Mammary epithelial cell (primary cell): ENCODE measurements at regions of chr11 and their contacts with region 1.

Region 1: DNA sequence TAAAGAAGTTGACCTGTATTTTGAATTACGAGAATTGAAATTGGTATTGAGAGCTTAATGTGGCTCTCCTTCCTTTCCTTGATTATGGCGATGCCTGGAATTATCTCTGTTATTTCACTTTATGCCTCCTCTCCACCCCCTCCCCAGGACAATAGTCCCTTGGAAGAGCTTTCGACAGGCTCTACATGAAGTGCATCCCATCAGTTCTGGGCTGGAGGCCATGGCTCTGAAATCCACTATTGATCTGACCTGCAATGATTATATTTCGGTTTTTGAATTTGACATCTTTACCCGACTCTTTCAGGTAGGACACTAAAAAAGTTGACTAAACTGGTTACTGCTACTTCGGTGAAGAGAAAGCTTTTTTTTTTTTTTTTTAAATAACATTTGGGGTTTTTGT is 43.2 kb downstream of the MCAM start:
- DNase-seq: no peak
- H3K4me3 ChIP-seq: no peak overlapping the region
- H3K27ac ChIP-seq: no peak overlapping the region
- H3K4me1 ChIP-seq: no peaks in the 10 kb centered on the region
- H3K27me3 ChIP-seq: no peaks in the 10 kb centered on the region
- CTCF ChIP-seq: no peak

Region 2: GRCh38 chr11:119121008-119121810 is 152.5 kb before region 1 on chr11 and contains the start of gene HINFP:
- CTCF ChIA-PET with region 1: no interaction called
- dilution Hi-C with region 1: loop called (anchors 10 kb)
- in situ Hi-C with region 1: no loop called
- intact Hi-C with region 1: no loop called
- DNase-seq: peak; percentile 99
- H3K4me3 ChIP-seq: peak within 1 kb of the TSS; percentile 77 to 99 (median 94)
- H3K27ac ChIP-seq: peak within 1 kb of the TSS; percentile 79
- H3K4me1 ChIP-seq: peaks cover 12% of the 10 kb centered on the region
- H3K27me3 ChIP-seq: no peaks in the 10 kb centered on the region
- CTCF ChIP-seq: no peak
- total RNA-seq, gene HINFP: 23.7 to 26.8 TPM

Region 3: DNA sequence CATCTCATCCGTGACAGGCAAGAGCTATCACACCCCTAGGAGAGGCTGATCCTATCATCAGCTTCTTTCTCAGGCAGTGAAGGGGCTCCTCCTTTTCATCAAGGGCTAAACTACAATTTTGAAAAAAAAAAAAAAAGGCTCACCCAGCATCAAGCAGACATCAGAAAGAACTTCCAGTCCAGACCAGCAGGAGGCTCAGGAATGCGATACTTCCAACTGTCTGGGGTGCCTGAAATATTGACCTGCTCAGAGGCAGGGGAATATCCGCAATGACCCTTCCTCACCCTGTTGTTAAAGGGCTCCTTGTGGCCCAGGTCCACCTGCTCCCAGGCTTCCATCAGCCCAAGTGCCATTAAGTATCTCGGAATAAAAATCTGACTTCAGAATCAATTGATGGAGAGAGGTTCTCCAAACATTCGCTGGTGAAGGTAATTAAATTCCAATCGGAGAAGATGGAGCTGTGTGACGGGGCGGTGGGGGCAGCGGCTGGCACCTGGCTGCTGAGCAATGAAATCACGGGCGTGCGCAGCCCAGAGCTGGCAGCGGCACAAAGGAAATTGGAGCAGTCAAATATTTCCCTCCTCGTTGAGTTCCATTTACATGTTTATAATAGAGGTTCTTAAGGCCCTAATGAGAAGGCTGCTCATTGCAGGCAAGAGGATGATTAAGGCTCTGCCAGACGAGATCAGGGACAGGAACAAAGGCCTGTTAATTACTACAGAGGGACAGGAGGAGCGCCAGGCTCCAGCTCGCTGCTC is 218.2 kb after region 1 on chr11:
- CTCF ChIA-PET with region 1: no interaction called
- dilution Hi-C with region 1: no loop called
- in situ Hi-C with region 1: no loop called
- intact Hi-C with region 1: no loop called
- DNase-seq: no peak
- H3K4me3 ChIP-seq: no peak overlapping the region
- H3K27ac ChIP-seq: no peak overlapping the region
- H3K4me1 ChIP-seq: no peaks in the 10 kb centered on the region
- H3K27me3 ChIP-seq: peaks cover 5% of the 10 kb centered on the region
- CTCF ChIP-seq: peak; percentile 37 to 44